Body of pancreas (tissue), 4 donors: ENCODE measurements at regions of chr22 and their contacts with region 1.

Region 1: GRCh38 chr22:36439481-36440271 is 41.8 kb downstream of the TXN2 start:
- DNase-seq: peak in 3 of 4 donors; percentile 64 to 79 (median 71)
- ATAC-seq: peak; percentile 36
- H3K4me3 ChIP-seq: no peak overlapping the region
- H3K27ac ChIP-seq: peak overlapping the region in 3 of 4 donors; percentile 22 to 67 (median 58)
- H3K4me1 ChIP-seq: peaks cover 37% of the 10 kb centered on the region
- H3K27me3 ChIP-seq: no peaks in the 10 kb centered on the region
- CTCF ChIP-seq: no peak
- POLR2A ChIP-seq: no peak

Region 2: GRCh38 chr22:36398621-36399469 is 40.8 kb before region 1 on chr22:
- intact Hi-C with region 1: loop called (anchors 10 kb)
- DNase-seq: no peak
- ATAC-seq: no peak
- H3K4me3 ChIP-seq: no peak overlapping the region
- H3K27ac ChIP-seq: no peak overlapping the region
- H3K4me1 ChIP-seq: peaks cover 13% of the 10 kb centered on the region
- H3K27me3 ChIP-seq: no peaks in the 10 kb centered on the region
- CTCF ChIP-seq: no peak
- POLR2A ChIP-seq: no peak